Panc1 (cell line): ENCODE measurements at regions of chr2 and their contacts with region 1.

Region 1: GRCh38 chr2:38560092-38560491 is 42.6 kb downstream of the HNRNPLL start:
- DNase-seq: no peak
- ATAC-seq: no peak
- H3K4me3 ChIP-seq: no peak overlapping the region
- H3K27ac ChIP-seq: no peak overlapping the region
- H3K4me1 ChIP-seq: no peaks in the 10 kb centered on the region
- H3K27me3 ChIP-seq: no peaks in the 10 kb centered on the region
- CTCF ChIP-seq: no peak

Region 2: GRCh38 chr2:38610851-38611801 is 51.0 kb after region 1 on chr2:
- CTCF ChIA-PET with region 1: no interaction called
- POLR2A ChIA-PET with region 1: no interaction called
- in situ Hi-C with region 1: no loop called
- intact Hi-C with region 1: no loop called
- DNase-seq: no peak
- ATAC-seq: no peak
- H3K4me3 ChIP-seq: no peak overlapping the region
- H3K27ac ChIP-seq: no peak overlapping the region
- H3K4me1 ChIP-seq: no peaks in the 10 kb centered on the region
- H3K27me3 ChIP-seq: no peaks in the 10 kb centered on the region
- CTCF ChIP-seq: no peak

Region 3: DNA sequence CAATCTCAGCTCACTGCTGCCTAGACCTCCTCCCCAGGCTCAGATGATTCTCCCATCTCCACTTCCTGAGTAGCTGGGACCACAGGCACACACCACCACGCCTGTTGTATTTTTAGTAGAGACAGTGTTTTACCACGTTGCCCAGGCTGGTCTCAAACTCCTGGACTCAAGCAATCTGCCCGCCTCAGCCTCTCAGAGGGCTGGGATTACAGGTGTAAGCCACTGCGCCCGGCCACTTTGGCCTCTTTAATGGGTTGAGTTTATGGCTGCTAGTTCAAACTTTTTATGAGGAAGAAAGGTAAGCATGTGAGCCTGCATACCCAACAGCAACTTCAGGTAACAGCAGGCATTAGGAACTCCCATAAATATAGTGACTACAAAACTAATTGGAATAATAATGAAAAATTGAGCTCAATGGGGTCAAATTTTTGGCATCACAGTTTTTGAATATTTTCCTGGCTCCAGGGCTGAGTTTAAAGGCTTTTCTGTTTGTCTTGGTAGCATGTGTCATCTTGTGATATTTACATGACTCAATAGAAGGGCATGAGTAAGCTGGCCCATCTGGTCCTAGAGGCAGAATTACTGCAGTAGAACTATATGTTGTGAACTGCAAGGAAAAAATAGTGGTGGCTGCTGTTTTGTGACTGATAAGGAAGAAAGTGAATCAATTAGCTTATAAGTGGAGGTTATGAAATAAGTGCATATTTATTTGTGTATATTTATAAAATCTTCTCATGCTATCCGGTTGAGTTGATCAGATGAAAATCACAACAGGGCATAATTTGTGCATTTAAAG is 130.6 kb after region 1 on chr2:
- CTCF ChIA-PET with region 1: no interaction called
- POLR2A ChIA-PET with region 1: interaction called, 18 read pairs
- in situ Hi-C with region 1: no loop called
- intact Hi-C with region 1: no loop called
- DNase-seq: peak; percentile 82
- ATAC-seq: peak; percentile 98
- H3K4me3 ChIP-seq: peak overlapping the region in 1 of 2 experiments; percentile 2; a peak in 1 of 4 replicates
- H3K27ac ChIP-seq: peak overlapping the region; percentile 91
- H3K4me1 ChIP-seq: peaks cover 33% of the 10 kb centered on the region
- H3K27me3 ChIP-seq: no peaks in the 10 kb centered on the region
- CTCF ChIP-seq: no peak

Region 4: GRCh38 chr2:38978296-38978903 is 418.3 kb after region 1 on chr2:
- CTCF ChIA-PET with region 1: no interaction called
- POLR2A ChIA-PET with region 1: no interaction called
- in situ Hi-C with region 1: no loop called
- intact Hi-C with region 1: no loop called
- DNase-seq: no peak
- ATAC-seq: no peak
- H3K4me3 ChIP-seq: no peak overlapping the region
- H3K27ac ChIP-seq: no peak overlapping the region
- H3K4me1 ChIP-seq: no peaks in the 10 kb centered on the region
- H3K27me3 ChIP-seq: no peaks in the 10 kb centered on the region
- CTCF ChIP-seq: no peak